ENCODE measurements at regions of chr12 and their contacts with region 1.

Region 1: DNA sequence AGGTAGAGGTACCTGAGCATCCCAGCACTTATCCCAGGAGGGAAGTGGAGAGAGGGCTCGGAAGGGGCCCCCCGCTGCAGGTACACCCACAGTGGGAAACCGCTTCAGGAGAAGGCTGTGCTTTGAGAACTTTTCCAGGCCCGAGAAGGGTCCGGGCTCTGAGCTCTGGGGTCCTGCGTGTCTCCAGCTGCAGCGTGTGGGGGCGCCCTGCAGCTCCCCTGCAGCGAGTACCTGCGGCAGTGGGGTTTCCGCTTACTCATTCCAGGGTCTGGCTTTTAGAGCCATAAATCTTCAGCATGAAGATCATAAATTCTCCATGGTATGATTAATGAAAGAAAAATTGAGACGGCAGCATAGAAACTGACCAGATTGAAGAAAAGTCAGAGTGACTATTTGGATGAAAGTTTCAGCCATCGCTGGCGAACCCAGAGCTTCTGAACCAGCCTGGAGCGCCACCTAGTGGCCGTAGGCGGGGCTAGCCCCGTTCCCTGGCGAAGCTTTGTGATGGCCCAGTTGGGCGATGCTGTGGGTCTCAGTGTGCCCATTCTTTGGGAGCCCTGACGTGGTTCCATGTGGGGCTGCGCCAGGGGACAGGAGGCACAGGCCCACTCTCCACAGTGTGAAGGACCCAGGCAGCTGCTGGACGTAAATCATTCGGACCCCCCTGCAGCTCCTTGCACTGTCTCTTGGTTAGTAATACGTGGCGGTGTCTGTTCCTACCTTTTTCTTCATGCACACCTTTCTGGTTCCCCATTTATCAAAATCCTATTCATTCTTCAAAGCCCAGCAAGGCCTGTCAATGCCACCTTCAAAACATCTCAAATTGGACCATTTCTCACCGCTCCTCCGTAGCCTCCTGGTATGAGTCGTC is 198.2 kb downstream of the TSPAN9 start:
- DNase-seq: peak; percentile 87
- ATAC-seq: peak; percentile 76

Region 2: GRCh38 chr12:3073438-3074250 is 201.8 kb before region 1 on chr12:
- intact Hi-C with region 1: loop called (anchors 2 kb)
- DNase-seq: peak; percentile 86
- ATAC-seq: peak; percentile 40

Region 3: DNA sequence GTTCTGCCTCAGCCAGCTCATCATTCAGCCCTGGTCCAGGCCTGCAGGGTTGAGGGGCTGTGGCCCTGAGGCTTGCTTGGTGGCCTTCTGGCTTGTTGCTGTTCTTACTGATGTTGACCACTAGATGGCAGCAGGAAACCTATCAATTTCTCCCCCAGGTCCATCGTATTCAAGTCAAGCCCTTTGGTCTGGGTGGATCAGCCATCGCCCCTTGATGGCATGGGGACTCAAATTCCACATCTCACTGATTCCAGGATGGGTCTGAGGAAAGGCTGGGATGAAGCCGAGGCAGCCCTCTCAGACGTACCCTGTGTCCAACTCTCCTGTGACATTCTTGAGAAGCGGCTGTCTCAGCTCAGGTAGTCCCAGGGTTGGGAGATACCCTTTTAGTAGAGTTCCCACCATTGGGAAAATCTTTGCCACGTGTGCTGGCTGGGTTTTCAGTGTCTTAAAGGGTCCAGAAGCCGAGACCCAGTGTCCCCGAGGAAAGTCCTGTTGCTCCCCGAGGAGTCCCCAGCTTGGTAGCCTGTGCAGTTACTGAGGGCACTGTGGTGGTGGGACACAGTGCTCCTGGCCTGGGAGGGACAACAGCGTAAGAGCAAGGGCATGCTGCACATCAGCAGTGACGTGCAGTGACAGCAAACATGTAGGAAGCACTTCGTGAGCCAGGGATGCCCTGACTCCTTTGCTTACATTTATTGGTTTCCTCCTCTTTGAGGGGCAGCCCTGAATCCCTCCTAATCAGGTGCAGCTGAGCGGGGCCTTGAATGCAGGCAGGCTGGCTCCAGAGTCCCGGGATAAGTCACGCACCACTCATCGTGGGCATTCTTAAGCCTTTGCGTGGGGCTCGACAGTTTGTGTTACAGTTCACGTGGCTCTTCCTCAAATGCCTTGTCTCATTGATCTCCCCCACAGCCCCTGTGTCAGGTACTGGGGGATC is 139.6 kb before region 1 on chr12:
- intact Hi-C with region 1: loop called (anchors 2 kb)
- DNase-seq: no peak
- ATAC-seq: peak; percentile 52

Region 4: DNA sequence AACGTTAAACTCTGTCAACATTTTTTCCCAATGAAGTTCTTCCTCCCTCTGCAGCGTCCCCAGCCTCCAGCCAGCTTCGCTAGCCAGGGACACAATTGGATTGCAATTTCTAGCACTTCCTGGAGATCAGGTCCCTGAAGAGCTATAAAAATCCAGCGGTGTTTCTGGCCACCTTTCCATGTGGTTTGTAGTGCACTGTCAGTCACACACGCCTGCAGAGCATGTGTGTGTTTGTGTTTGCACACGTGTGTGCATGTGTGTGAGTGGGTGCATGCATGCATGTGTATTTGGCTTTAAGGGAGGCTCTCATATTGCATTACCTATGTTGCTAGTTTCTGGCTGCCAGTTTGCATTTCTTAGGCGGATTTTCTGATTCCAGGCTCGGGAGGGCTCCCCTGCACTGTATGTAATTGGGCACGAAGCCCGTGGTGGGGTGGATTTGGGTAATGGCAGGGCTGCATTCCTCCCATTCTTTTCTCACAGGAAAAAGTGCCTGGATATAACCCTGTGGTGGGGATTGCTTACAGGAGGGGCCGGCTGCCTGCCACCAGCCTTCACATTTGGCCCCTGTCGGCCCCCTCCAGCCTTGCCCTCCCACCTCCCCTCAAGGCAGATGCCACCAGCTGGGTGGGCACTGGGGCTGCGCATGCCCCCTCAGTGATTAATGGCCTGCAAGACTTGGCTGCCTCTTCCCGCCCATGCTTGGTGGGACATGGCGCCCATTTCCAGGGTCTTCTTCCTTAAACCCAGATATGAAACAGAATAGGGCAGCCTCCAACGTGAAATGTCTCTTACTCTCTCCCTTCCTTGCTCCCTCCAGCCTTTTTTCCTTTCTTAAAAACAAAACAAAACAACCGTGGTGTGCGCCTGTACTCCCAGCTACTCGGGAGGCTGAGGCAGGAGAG is 124.2 kb before region 1 on chr12:
- intact Hi-C with region 1: no loop called
- DNase-seq: no peak
- ATAC-seq: peak; percentile 49

Measured in Right ventricle myocardium superior (tissue), 1 donor.